ENCODE measurements at regions of chr10 and their contacts with region 1.

Region 1: DNA sequence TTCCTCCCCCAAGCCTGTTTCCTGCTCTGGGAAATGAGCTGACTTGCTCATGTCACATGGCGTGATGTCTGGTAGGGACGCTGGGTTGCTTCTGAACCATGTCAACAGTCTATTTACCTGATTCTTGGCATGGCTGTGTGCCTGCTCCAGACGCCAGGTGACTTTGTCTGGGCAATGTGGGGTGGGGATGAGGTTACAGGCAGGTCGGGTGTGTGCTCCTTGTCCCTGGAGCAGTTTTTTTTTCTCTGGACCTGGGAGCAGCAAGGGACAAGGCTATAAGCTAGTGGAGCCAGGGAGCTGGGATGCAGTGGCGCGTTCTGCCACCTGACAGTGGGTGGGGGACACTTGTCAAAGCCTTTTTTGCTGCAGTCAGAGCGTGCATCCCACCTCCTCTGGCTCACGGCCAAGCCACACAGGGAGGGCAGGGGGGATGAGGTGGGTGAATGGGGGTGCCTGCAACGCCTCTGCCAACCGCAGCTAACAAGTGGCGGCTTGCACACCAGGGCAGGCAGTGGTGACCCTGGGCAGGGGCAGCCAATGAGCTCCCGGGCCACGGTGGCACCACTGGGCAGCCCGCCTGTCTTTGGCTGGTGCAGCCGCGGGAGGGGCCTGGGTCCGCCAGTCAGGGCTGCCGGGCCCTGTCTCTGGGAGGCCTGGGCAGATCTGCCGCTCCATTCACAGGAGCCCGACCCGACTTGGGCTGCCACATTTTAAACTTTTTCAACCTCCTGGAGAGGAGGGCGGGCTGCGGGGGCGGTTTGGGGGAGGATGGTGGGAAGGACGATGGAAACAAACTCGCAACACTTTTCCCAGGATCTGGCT is 22.9 kb downstream of the DNAJB12 start:
- DNase-seq: peak; percentile 99
- H3K4me3 Mint-ChIP-seq: peak overlapping the region; percentile 25
- H3K27ac Mint-ChIP-seq: peak overlapping the region; percentile 92
- H3K4me1 Mint-ChIP-seq: peaks cover 61% of the 10 kb centered on the region
- H3K27me3 Mint-ChIP-seq: no peaks in the 10 kb centered on the region
- CTCF ChIP-seq: no peak

Region 2: GRCh38 chr10:71708301-71708703 is 623.5 kb before region 1 on chr10:
- CTCF ChIA-PET with region 1: no interaction called
- POLR2A ChIA-PET with region 1: no interaction called
- intact Hi-C with region 1: no loop called
- DNase-seq: peak; percentile 47
- H3K4me3 Mint-ChIP-seq: no peak overlapping the region
- H3K27ac Mint-ChIP-seq: no peak overlapping the region
- H3K4me1 Mint-ChIP-seq: peaks cover 11% of the 10 kb centered on the region
- H3K27me3 Mint-ChIP-seq: no peaks in the 10 kb centered on the region
- CTCF ChIP-seq: peak; percentile 84

Region 3: GRCh38 chr10:72126184-72126871 is 205.5 kb before region 1 on chr10:
- CTCF ChIA-PET with region 1: interaction called, 42 read pairs
- POLR2A ChIA-PET with region 1: interaction called, 5 read pairs
- intact Hi-C with region 1: loop called (anchors 1 kb)
- DNase-seq: peak; percentile 59
- H3K4me3 Mint-ChIP-seq: no peak overlapping the region
- H3K27ac Mint-ChIP-seq: no peak overlapping the region
- H3K4me1 Mint-ChIP-seq: no peaks in the 10 kb centered on the region
- H3K27me3 Mint-ChIP-seq: no peaks in the 10 kb centered on the region
- CTCF ChIP-seq: peak; percentile 31

Region 4: GRCh38 chr10:72229261-72230251 is 102.3 kb before region 1 on chr10:
- CTCF ChIA-PET with region 1: interaction called, 26 read pairs
- POLR2A ChIA-PET with region 1: interaction called, 20 read pairs
- intact Hi-C with region 1: no loop called
- DNase-seq: peak; percentile 91
- H3K4me3 Mint-ChIP-seq: no peak overlapping the region
- H3K27ac Mint-ChIP-seq: peak overlapping the region; percentile 68
- H3K4me1 Mint-ChIP-seq: peaks cover 25% of the 10 kb centered on the region
- H3K27me3 Mint-ChIP-seq: no peaks in the 10 kb centered on the region
- CTCF ChIP-seq: no peak

Region 5: DNA sequence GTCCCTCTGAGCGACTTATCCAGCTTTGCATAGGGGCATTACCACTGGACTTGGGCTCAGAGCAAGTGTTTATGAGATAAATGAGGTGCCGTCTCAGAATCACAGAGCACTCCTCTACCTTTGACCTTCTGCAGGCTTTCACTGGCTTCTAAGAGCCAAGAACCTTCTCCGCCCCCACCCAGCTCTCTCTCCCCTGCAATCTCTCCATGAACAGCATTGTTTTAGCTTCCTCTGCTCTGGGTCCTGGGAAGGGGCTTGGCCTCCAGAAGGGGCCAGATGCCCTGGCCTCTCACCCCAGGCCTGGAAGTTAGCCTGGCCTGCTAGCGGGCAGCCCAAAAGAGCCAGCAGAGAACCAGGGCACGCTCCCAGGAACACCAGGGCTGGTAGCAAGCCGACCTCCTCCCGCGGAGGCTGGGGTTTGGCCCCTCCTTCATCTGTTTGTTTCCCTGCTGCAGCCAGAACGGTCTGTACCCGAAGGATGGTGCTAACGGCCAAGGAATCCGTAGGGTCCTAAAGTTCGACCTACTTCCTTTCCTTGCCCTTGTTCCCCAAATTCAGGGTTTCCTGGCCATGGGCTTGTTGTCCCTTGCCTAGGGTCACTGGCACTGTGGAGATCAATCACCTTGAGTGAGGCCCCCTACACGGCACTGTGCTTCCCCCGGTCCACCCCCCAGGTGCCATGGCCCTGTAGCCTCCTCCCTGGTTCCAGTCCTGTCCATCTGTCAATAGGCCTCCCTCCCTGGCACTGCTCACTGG is 76.8 kb before region 1 on chr10:
- CTCF ChIA-PET with region 1: interaction called, 5 read pairs
- POLR2A ChIA-PET with region 1: interaction called, 39 read pairs
- intact Hi-C with region 1: no loop called
- DNase-seq: peak; percentile 93
- H3K4me3 Mint-ChIP-seq: peak overlapping the region; percentile 46
- H3K27ac Mint-ChIP-seq: peak overlapping the region; percentile 88
- H3K4me1 Mint-ChIP-seq: peaks cover 48% of the 10 kb centered on the region
- H3K27me3 Mint-ChIP-seq: no peaks in the 10 kb centered on the region
- CTCF ChIP-seq: no peak

Region 6: GRCh38 chr10:72292223-72292691 is 39.6 kb before region 1 on chr10:
- CTCF ChIA-PET with region 1: interaction called, 6 read pairs
- POLR2A ChIA-PET with region 1: interaction called, 20 read pairs
- intact Hi-C with region 1: no loop called
- DNase-seq: peak; percentile 96
- H3K4me3 Mint-ChIP-seq: no peak overlapping the region
- H3K27ac Mint-ChIP-seq: peak overlapping the region; percentile 57
- H3K4me1 Mint-ChIP-seq: peaks cover 18% of the 10 kb centered on the region
- H3K27me3 Mint-ChIP-seq: no peaks in the 10 kb centered on the region
- CTCF ChIP-seq: no peak

Region 7: GRCh38 chr10:72319416-72320254 is 12.2 kb before region 1 on chr10:
- CTCF ChIA-PET with region 1: interaction called, 11 read pairs
- POLR2A ChIA-PET with region 1: interaction called, 249 read pairs
- intact Hi-C with region 1: loop called (anchors 1 kb)
- DNase-seq: peak; percentile 96
- H3K4me3 Mint-ChIP-seq: peak overlapping the region; percentile 56
- H3K27ac Mint-ChIP-seq: peak overlapping the region; percentile 95
- H3K4me1 Mint-ChIP-seq: peaks cover 47% of the 10 kb centered on the region
- H3K27me3 Mint-ChIP-seq: no peaks in the 10 kb centered on the region
- CTCF ChIP-seq: no peak

Region 8: GRCh38 chr10:72729528-72729927 is 397.7 kb after region 1 on chr10:
- CTCF ChIA-PET with region 1: no interaction called
- POLR2A ChIA-PET with region 1: no interaction called
- intact Hi-C with region 1: no loop called
- DNase-seq: no peak
- H3K4me3 Mint-ChIP-seq: no peak overlapping the region
- H3K27ac Mint-ChIP-seq: no peak overlapping the region
- H3K4me1 Mint-ChIP-seq: no peaks in the 10 kb centered on the region
- H3K27me3 Mint-ChIP-seq: no peaks in the 10 kb centered on the region
- CTCF ChIP-seq: no peak

Measured in MCF 10A (cell line).